Esophagus muscularis mucosa (tissue), 4 donors: ENCODE measurements at regions of chr18 and their contacts with region 1.

Region 1: DNA sequence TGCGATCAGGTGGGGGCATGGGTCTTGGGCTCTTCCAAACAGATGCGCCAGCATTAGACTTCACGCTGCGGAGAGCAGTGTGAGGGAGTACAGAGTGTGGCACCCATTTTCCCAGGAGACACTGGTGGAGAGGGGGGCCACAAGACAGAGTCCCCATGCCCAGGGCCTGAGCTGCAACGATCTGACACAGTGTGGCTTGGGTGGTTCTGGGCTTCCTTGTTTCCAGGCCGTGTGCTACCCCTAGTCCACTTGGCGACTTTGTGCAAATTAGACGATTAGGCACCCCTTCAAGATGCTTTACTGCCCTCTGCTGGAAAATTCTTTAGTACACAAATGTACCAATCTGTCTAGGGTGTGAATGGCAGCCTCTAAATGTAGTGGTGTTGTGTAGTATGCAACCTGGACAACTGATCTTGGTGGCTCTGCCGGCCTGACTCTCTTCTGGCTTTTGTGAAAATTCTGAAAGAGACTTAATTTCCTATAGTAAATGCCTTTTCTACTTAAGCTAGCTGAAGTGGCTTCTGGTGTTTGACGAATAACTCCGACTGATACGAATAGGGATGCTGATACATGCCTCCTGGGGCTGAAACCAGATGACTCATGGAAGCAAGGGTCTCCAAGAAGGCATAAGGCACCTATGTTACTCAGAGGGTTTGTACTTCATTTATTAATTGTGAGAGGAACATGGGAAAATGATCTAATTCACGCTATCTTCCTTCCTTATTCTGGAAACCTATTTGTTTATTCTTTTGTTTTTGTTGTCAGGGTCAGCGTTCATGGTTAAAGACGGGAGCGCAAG is 92.3 kb upstream of the SMAD2 start:
- DNase-seq: no peak
- H3K4me3 ChIP-seq: no peak overlapping the region
- H3K27ac ChIP-seq: no peak overlapping the region
- H3K4me1 ChIP-seq: peaks cover 22 to 37% (median 35%) of the 10 kb centered on the region in 4 donors
- H3K27me3 ChIP-seq: peaks cover 0 to 14% (median 0%) of the 10 kb centered on the region in 4 donors
- CTCF ChIP-seq: peak; percentile 39 to 62 (median 45)
- EP300 ChIP-seq: no peak
- POLR2A ChIP-seq: no peak

Region 2: DNA sequence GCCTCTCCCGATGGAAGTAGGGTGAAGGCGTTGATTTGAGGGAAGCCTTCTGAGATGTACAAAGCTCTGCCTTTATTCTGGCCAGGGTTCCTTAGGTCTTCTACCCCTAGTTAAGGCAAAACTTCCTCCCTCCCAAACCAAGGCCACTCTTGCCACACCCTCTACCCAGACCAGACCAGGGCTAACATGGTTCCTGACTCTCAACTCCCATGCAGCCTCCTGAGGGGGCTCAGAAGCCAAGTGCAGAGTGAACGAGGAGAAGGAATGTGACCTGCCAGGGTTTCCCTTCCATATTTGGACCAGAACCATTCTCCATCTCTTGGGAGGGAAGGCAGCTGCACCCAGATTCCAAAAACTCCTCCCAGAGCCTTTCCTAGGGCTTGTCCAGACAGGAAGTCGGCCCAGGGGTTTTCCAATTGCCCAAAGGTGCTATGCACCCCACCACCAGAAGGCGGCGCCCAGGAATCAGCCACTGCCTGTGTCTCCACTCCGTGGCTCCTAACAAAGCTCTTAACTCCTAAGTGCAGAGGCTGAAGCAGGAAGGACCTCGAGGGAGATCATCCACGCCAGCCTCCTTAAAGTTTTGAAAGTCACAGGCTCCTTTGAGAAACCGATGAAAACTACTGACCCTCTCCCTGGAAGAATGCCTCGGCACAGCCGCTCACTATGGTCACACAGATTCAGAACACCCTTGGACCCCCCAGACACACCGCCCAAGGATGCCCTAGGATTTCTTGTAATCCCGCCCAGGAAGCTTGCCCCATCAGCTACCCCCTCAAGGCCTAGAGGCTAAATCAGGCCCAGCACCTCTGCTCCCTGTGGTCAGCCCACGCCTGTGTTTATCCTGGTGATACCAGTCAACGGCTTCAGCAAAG is 250.1 kb before region 1 on chr18:
- intact Hi-C with region 1: loop called (anchors 5 kb)
- DNase-seq: peak; percentile 89
- H3K4me3 ChIP-seq: no peak overlapping the region
- H3K27ac ChIP-seq: no peak overlapping the region
- H3K4me1 ChIP-seq: no peaks in the 10 kb centered on the region
- H3K27me3 ChIP-seq: no peaks in the 10 kb centered on the region
- CTCF ChIP-seq: peak; percentile 70 to 78 (median 72)
- EP300 ChIP-seq: no peak
- POLR2A ChIP-seq: no peak

Region 3: GRCh38 chr18:47930931-47931717 is 91.6 kb before region 1 on chr18:
- intact Hi-C with region 1: loop called (anchors 5 kb)
- DNase-seq: peak; percentile 98
- H3K4me3 ChIP-seq: peak overlapping the region; percentile 78 to 99 (median 92)
- H3K27ac ChIP-seq: peak overlapping the region; percentile 95 to 97 (median 97)
- H3K4me1 ChIP-seq: peaks cover 25 to 43% (median 43%) of the 10 kb centered on the region in 4 donors
- H3K27me3 ChIP-seq: no peaks in the 10 kb centered on the region
- CTCF ChIP-seq: no peak
- EP300 ChIP-seq: no peak
- POLR2A ChIP-seq: peak; percentile 43

Region 4: GRCh38 chr18:48330403-48331022 is 307.8 kb after region 1 on chr18:
- intact Hi-C with region 1: loop called (anchors 10 kb)
- DNase-seq: no peak
- H3K4me3 ChIP-seq: no peak overlapping the region
- H3K27ac ChIP-seq: no peak overlapping the region
- H3K4me1 ChIP-seq: peaks cover 0 to 15% (median 7%) of the 10 kb centered on the region in 4 donors
- H3K27me3 ChIP-seq: no peaks in the 10 kb centered on the region
- CTCF ChIP-seq: no peak
- EP300 ChIP-seq: no peak
- POLR2A ChIP-seq: no peak